Head of caudate nucleus (tissue), 42 donors: ENCODE measurements at regions of chr16 and their contacts with region 1.

Region 1: DNA sequence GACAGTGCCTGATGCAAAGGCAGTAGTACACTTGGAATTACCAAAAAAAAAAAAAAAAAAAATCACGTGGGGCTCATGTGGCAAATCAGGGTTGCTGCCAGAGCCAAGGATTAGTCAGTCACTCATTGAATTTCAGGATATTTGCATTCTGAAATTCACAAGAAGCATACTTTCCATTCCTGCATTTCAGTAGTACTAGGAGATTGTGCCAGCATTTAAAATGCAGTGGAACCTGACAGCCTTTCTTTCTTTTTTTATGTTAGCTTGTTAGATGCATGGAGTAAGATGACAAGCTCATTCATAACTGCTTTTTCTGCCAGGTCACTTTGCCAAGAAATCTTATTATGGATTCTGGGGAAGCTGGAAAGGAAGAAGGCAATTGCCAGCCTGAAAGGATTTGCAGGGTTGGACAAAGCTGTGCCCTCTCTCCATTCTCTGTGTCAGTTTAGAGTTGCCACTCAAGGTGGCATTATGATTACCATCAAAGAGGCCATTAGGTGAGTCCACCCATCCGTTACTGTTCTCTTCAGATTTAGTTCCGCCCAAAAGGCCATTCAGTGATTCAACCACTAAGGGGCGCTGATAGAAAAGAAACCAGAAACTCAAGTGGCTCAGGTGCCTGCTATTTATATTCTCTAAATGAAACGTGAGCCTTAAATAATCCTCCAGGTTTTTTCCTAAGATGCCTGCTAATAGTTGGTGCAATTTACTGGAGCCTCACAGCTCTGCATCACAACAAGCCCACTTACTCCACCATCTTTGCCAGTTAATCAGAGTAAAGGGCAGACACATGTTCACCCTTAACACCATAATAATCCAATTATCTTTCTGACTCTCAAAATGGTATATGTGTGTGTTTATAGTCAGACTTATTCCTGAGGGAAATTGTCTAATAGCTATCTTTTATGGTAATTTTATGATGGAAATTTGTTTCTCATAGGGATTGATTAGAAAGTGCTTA is 59.0 kb downstream of the TANGO6 start:
- DNase-seq: peak in 31 of 42 donors; percentile 14 to 81 (median 48)

Region 2: GRCh38 chr16:68936736-68937631 is 34.7 kb after region 1 on chr16:
- intact Hi-C with region 1: no loop called
- DNase-seq: no peak

Region 3: DNA sequence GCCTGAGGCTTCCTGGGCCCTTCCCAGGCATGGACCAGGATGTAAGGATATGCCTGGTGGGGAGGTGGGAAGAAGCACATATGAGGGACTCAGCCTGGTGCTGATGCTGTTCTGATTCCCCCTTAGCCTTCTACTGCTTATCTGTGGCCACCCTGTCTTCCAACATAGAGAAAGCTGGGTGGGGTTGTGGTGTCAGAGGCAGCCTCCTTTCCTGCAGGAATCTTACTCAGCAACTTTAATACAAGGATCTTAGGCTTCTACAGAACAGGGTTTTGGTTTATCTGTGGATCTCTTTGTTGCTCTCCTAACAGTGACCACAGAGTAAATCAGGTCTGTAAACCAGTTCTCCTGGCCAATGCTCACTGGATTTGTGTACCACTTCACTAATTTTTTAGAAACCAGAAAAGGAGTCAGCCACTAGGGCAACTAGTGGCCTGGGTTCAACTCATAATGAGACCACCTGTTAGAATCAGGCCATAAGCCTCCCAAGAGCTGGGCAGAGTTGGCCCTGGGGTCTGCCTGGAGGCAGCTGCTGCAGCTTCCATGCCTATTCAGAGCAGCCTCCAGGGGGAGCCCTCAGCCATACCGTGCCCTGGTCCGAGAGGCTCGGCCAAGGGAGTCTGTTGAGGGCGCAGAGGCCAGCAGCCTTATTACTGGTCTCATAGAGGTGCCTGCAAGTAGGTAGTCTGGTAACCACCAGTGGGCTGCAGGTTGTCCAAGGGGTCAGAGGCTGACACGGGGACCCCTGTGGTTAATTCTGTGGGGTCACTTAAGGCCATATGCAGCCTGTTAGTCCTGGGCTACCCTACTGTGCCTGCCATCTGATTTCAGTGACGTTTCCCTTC is 210.2 kb after region 1 on chr16:
- intact Hi-C with region 1: loop called (anchors 5 kb)
- DNase-seq: peak in 29 of 42 donors; percentile 20 to 79 (median 52)

Region 4: GRCh38 chr16:69132424-69133252 is 230.3 kb after region 1 on chr16 and contains the starts of genes CHTF8 and UTP4:
- intact Hi-C with region 1: loop called (anchors 5 kb)
- DNase-seq: peak; percentile 70 to 95 (median 89)